OCI-LY7 (cell line): ENCODE measurements at regions of chr11 and their contacts with region 1.

Region 1: GRCh38 chr11:17354601-17354991 is 3.0 kb downstream of the NCR3LG1 start:
- DNase-seq: peak; percentile 86
- H3K4me3 ChIP-seq: peak overlapping the region; percentile 70
- H3K27ac ChIP-seq: no peak overlapping the region
- H3K4me1 ChIP-seq: peaks cover 26% of the 10 kb centered on the region
- CTCF ChIP-seq: peak; percentile 90

Region 2: GRCh38 chr11:17077520-17078401 is 276.8 kb before region 1 on chr11 and contains the start of gene RPS13:
- CTCF ChIA-PET with region 1: no interaction called
- POLR2A ChIA-PET with region 1: interaction called, 5 read pairs
- intact Hi-C with region 1: loop called (anchors 1 kb)
- DNase-seq: peak; percentile 98
- H3K4me3 ChIP-seq: peak within 1 kb of the TSS; percentile 84
- H3K27ac ChIP-seq: peak within 1 kb of the TSS; percentile 69
- H3K4me1 ChIP-seq: peaks cover 24% of the 10 kb centered on the region
- CTCF ChIP-seq: no peak
- total RNA-seq, gene RPS13: 1,576 and 1,911 TPM in 2 replicates

Region 3: DNA sequence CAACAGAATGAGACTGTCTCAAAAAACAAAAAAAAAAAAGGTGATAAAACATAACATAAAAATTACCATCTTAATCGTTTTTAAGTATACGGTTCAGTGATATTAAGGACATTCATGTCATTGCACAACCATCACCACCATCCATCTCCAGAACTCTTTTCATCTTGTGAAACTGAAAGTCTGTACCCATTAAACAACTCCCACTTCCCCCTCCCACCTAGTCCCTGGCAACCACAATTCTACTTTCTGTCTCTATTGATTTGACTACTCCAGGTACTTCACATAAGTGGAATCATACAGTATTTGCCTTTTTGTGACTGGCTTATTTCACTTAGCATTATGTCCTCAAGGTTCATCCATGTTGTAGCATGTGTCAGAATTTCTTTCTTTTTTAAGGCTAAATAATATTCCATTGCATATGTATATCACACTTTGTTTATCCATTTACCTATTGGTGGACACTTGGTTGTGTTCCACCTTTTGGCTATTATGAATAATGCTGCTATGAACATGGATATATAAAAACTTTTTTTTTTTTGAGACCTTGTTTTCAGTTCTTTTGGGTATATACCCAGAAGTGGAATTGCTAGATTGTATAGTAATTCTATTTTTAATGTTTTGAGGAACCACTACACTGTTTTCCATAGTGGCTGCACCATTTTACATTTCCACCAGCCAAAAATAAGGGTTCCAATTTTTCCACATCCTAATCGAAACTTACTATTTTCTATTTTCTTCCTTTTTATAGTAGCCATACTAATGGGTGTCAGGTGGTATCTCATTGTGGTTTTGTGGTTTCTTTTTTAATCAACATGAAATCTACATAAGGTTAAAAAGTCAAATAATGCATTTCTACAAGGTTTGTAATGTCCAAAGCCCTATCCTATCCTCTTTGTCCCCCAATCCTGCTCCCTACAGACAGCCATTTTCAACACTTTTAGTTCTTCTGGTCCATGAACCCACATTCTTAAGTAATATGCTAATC is 123.4 kb before region 1 on chr11:
- CTCF ChIA-PET with region 1: no interaction called
- POLR2A ChIA-PET with region 1: no interaction called
- intact Hi-C with region 1: loop called (anchors 1 kb)
- DNase-seq: peak; percentile 27
- H3K4me3 ChIP-seq: no peak overlapping the region
- H3K27ac ChIP-seq: no peak overlapping the region
- H3K4me1 ChIP-seq: peaks cover 20% of the 10 kb centered on the region
- CTCF ChIP-seq: no peak

Region 4: GRCh38 chr11:17276236-17277023 is 78.2 kb before region 1 on chr11 and contains the start of gene NUCB2:
- CTCF ChIA-PET with region 1: no interaction called
- POLR2A ChIA-PET with region 1: interaction called, 5 read pairs
- intact Hi-C with region 1: loop called (anchors 2 kb)
- DNase-seq: peak; percentile 96
- H3K4me3 ChIP-seq: peak within 1 kb of the TSS; percentile 79
- H3K27ac ChIP-seq: peak within 1 kb of the TSS; percentile 58
- H3K4me1 ChIP-seq: peaks cover 17% of the 10 kb centered on the region
- CTCF ChIP-seq: no peak
- total RNA-seq, gene NUCB2: 42.4 and 64.3 TPM in 2 replicates

Region 5: DNA sequence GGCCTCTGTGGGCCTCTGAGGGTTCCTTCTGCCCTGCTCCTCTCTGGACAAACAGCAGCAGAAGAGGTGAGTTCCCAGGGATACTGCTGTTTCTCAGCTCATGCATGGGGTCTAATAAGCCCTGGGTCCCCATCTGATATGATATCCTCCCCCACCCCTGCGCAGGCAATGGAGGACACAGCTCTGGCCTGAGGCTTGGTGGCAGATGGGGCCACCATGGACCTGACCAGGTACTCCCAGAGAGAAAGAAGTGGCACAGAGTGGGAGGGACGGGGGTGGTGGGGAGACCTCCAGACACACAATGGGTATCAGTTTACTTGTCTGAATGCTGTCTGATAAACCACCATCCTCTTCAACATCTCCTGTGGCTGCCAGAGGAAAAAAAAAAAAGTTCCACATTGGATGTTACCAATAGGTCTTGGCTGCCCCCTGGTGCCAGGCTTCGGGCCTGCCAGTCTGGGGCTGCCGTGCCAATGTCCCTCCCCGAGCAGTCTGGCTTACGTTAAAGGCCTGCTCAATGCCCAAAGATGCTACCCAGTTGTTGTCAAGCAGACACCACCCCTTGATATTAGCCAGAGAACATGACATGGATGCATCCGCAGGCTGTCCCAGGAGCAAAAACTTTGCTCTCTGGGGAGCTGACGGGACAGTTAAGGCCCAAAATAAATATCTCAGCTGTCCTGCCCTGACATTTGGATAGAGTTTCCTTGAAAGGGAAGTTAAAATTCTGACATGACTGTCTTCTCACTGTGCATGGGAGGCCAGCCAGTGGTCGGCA is 149.9 kb after region 1 on chr11:
- CTCF ChIA-PET with region 1: no interaction called
- POLR2A ChIA-PET with region 1: no interaction called
- intact Hi-C with region 1: loop called (anchors 1 kb)
- DNase-seq: peak; percentile 81
- H3K4me3 ChIP-seq: no peak overlapping the region
- H3K27ac ChIP-seq: no peak overlapping the region
- H3K4me1 ChIP-seq: no peaks in the 10 kb centered on the region
- CTCF ChIP-seq: peak; percentile 94

Region 6: GRCh38 chr11:17528181-17528691 is 173.6 kb after region 1 on chr11:
- CTCF ChIA-PET with region 1: interaction called, 3 read pairs
- POLR2A ChIA-PET with region 1: no interaction called
- intact Hi-C with region 1: loop called (anchors 1 kb)
- DNase-seq: peak; percentile 51
- H3K4me3 ChIP-seq: no peak overlapping the region
- H3K27ac ChIP-seq: no peak overlapping the region
- H3K4me1 ChIP-seq: no peaks in the 10 kb centered on the region
- CTCF ChIP-seq: peak; percentile 89